H1 (cell line): ENCODE measurements at regions of chr12 and their contacts with region 1.

Region 1: DNA sequence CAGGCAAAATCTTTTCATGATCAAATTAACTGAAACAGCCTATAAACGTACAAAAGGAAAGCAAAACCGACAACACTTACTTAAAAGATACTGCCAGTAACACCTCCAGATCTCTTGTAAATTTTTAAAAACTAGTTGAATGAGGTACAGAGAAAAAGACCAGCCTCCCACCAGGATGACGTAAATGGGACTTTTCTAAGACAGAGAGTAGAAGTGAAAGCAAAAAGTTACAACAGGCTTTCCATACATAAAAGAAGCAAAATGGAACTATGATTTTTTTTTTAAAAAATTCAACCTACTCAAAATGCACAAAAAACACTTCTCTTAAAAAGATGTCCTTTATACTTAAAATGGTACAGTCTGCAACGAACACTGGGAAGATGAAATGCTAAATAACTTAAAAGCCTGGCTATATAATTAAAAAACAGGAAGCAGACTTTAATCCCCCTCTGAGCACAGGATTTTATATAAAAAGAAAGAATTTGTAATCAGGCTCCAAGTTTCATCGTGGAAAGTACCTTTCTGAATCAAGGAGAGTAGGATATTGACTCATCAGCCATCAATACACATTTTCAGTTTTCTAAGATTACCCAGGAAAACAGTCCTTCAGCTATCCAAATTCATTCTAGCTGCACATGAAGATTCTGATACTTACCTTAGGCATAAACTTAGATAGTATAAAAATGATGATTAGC is 14.2 kb upstream of the MYO1A start:
- DNase-seq: no peak
- H3K4me3 ChIP-seq: no peak overlapping the region
- H3K27ac ChIP-seq: no peak overlapping the region
- H3K4me1 ChIP-seq: no peaks in the 10 kb centered on the region
- H3K27me3 ChIP-seq: no peaks in the 10 kb centered on the region
- CTCF ChIP-seq: no peak
- EP300 ChIP-seq: no peak
- POLR2A ChIP-seq: no peak
- RAD21 ChIP-seq: no peak

Region 2: GRCh38 chr12:57012600-57013465 is 51.3 kb before region 1 on chr12:
- CTCF ChIA-PET with region 1: interaction called, 60 read pairs
- POLR2A ChIA-PET with region 1: interaction called, 5 read pairs
- DNase-seq: no peak
- H3K4me3 ChIP-seq: no peak overlapping the region
- H3K27ac ChIP-seq: no peak overlapping the region
- H3K4me1 ChIP-seq: peaks cover 6 to 20% (median 15%) of the 10 kb centered on the region in 4 experiments
- H3K27me3 ChIP-seq: no peaks in the 10 kb centered on the region
- CTCF ChIP-seq: peak; percentile 41 to 59 (median 46)
- EP300 ChIP-seq: no peak
- POLR2A ChIP-seq: no peak
- RAD21 ChIP-seq: peak; percentile 60 to 62

Region 3: DNA sequence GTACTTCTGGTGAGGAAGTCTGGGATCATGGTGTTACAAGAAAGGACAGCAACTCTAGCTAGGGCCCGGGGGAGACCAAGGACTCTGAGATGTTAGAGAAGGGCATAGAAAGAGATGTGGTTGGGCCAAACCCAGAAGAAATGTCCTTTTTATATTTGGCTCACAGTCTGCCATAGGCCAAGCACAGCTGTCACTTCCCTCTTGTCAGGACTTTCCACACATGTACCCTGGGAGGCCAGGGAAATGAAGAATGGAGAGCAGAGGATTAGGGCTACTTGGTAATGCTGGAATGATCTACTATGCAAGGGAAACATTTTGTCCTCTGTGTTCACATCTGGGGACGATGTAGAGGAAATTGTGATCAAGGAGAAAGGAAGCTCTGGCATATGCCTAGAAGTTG is 23.4 kb before region 1 on chr12:
- CTCF ChIA-PET with region 1: interaction called, 77 read pairs
- POLR2A ChIA-PET with region 1: interaction called, 4 read pairs
- DNase-seq: no peak
- H3K4me3 ChIP-seq: no peak overlapping the region
- H3K27ac ChIP-seq: no peak overlapping the region
- H3K4me1 ChIP-seq: no peaks in the 10 kb centered on the region
- H3K27me3 ChIP-seq: no peaks in the 10 kb centered on the region; a peak in 1 of 7 replicates
- CTCF ChIP-seq: no peak
- EP300 ChIP-seq: no peak
- POLR2A ChIP-seq: no peak
- RAD21 ChIP-seq: no peak

Region 4: DNA sequence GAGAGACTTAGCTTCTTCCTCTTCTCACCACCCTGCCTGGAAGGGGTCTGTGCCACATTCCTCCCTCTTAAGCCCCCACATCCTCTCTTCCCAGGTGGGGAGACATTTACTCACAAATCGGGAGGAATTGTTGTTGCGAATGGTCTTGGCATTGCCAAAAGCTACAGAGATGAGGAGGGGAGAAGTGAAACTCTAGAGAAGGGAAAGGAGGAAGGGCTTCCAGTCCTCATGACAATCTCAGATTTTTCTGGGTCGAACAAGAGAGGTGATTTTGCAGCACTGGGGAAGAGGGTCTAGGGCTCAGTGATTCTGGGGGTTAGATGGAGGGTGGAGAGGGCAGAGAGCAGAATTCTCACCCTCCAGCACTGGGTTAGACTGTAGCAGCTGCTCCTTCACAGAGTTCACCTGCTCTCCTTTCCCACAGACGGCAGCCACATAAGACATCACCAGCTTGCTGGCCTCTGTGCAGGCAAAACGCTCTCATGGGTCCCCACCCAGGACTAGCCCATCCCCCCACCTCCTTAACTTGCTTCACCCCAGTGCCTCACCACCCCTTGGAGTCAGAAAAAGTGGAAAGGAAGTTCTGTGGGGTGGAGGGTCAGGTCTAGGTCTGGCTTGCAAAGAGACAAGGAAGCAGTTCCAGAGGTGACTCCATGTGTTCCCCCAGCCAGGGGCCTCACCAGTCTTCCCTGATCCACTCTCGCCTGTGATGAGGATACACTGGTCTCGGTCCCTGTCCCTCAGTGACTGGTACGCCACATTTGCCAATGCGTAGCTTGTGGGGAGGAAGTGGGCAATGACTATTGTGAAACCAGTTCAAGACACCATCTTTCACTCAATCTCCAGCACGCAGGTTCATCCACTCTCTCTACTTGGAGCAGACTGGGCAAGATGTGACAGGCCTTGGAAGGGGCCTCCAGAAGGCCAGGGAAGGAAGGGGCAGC is 16.9 kb before region 1 on chr12:
- CTCF ChIA-PET with region 1: interaction called, 77 read pairs
- POLR2A ChIA-PET with region 1: interaction called, 6 read pairs
- DNase-seq: no peak
- H3K4me3 ChIP-seq: no peak overlapping the region
- H3K27ac ChIP-seq: no peak overlapping the region
- H3K4me1 ChIP-seq: no peaks in the 10 kb centered on the region
- H3K27me3 ChIP-seq: no peaks in the 10 kb centered on the region
- CTCF ChIP-seq: no peak
- EP300 ChIP-seq: no peak
- POLR2A ChIP-seq: no peak
- RAD21 ChIP-seq: no peak